ENCODE measurements at regions of chr15 and their contacts with region 1.

Region 1: GRCh38 chr15:67456677-67457529 is 64.0 kb upstream of the C15orf61 start:
- DNase-seq: peak; percentile 91
- ATAC-seq: peak; percentile 99
- H3K4me3 Mint-ChIP-seq: no peak overlapping the region
- H3K27ac Mint-ChIP-seq: no peak overlapping the region
- H3K4me1 Mint-ChIP-seq: peaks cover 2% of the 10 kb centered on the region
- H3K27me3 Mint-ChIP-seq: peaks cover 3% of the 10 kb centered on the region
- CTCF ChIP-seq: peak; percentile 89

Region 2: DNA sequence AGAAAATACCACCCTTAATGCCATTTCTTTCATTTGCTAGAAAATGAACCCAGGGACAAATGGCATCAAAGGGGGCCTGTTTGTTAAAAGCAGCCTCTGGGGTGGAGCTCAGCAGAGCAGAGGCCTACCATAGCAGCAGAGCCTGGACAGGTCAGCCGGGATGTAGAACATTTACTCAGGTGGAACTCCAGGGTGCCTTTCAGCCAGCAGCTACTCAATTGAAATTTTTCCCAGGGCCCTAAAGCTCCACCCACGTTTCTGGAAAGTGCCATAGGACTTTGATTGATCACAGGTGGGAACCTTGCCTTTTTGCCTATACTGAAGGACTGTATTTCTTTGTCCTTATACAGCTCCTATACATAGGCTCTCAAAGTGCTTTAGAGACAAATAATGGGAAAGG is 10.5 kb before region 1 on chr15:
- CTCF ChIA-PET with region 1: interaction called, 16 read pairs
- POLR2A ChIA-PET with region 1: no interaction called
- intact Hi-C with region 1: no loop called
- DNase-seq: no peak
- ATAC-seq: no peak
- H3K4me3 Mint-ChIP-seq: no peak overlapping the region
- H3K27ac Mint-ChIP-seq: no peak overlapping the region
- H3K4me1 Mint-ChIP-seq: no peaks in the 10 kb centered on the region
- H3K27me3 Mint-ChIP-seq: no peaks in the 10 kb centered on the region
- CTCF ChIP-seq: no peak

Region 3: GRCh38 chr15:67832031-67832551 is 375.2 kb after region 1 on chr15:
- CTCF ChIA-PET with region 1: interaction called, 74 read pairs
- POLR2A ChIA-PET with region 1: interaction called, 3 read pairs
- intact Hi-C with region 1: loop called (anchors 2 kb)
- DNase-seq: no peak
- ATAC-seq: no peak
- H3K4me3 Mint-ChIP-seq: no peak overlapping the region
- H3K27ac Mint-ChIP-seq: no peak overlapping the region
- H3K4me1 Mint-ChIP-seq: peaks cover 32% of the 10 kb centered on the region
- H3K27me3 Mint-ChIP-seq: peaks cover 69% of the 10 kb centered on the region
- CTCF ChIP-seq: no peak